ENCODE measurements at regions of chr4 and their contacts with region 1.

Region 1: DNA sequence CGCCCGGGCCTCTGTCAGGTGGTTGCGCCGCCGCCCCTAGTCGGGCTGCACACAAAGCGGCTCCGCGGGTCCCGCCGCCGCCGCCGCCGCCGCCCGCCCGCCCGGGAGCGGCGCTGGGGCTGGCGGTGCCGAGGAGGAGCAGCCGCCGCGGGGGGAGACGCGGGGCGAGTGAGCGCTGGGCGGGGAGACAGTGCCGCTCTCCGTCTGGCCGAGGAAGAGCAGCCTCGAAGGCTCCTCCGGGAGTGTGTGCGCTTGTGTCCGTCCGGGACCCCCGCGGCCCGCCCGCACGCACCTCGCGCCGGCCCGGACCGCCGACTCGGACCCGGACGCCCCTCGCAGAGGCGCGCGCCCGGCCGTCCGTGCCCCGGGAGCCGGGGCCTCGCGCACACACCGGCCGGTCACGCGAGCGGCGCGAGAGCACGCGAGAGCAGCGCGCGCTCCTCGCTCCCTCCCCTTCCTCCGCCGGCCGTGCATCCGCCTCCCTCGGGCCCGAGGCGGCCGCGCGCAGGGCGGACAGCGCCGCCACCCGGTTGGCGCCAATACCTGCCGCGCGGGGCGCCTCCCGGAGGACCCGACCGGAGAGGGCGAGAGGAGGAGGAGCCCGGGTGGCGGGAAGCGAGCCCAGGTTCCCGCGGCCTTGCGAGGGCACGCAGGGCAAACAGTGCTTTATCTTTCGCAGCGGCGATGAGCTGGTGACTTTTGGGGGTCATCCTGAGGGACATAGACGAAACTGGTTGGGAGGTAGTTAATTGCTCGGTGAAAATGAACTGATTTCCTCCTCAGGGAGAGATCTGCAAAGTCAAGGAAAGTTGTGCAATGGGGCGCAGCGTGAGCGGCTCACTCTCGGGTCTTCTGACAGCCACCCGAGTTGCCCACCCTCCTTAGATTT is at the start of gene PDS5A:
- DNase-seq: peak; percentile 89 to 96 (median 95)
- ATAC-seq: peak; percentile 92 to 95
- H3K4me3 ChIP-seq: peak within 1 kb of the TSS; percentile 98
- H3K27ac ChIP-seq: peak within 1 kb of the TSS; percentile 93
- H3K4me1 ChIP-seq: no peaks in the 10 kb centered on the region
- H3K27me3 ChIP-seq: no peaks in the 10 kb centered on the region
- total RNA-seq, gene PDS5A: 30.0 to 37.3 (median 36.5) TPM

Region 2: DNA sequence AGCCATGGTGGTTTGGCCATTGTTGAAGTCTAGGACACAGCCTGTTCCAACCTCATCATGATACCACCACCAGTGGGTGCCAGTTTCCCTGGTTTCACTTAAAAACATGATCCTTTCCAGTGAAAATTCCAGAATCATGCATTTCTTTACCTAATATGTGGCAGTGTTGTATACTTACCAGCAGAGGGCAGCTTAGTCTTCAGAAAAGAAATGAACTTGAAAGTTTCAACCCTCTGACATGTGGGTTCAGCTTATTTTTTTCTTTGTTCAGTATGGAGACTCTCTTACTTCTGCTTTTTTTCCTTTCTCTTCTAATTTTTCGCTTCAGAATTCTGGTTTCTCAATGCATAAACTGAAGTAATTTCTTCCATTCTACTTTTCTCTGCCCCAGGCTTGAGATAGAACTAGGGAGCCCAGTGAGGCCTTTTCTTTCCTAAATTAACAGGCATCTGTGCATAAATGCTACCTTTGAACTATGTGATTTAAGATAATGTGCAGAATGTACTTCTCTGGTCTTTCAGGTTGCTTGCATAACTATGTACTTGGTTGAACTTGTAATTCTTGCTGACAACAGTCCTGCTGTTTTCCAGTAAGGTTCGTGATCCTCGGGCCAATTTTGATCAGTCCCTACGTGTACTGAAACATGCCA is 508.2 kb before region 1 on chr4:
- intact Hi-C with region 1: loop called in 2 of 4 experiments (anchors 5 to 10 kb)
- DNase-seq: peak in 2 of 3 donors; percentile 30 to 63
- ATAC-seq: peak; percentile 69 to 86
- H3K4me3 ChIP-seq: no peak overlapping the region
- H3K27ac ChIP-seq: no peak overlapping the region
- H3K4me1 ChIP-seq: no peaks in the 10 kb centered on the region
- H3K27me3 ChIP-seq: no peaks in the 10 kb centered on the region

Region 3: DNA sequence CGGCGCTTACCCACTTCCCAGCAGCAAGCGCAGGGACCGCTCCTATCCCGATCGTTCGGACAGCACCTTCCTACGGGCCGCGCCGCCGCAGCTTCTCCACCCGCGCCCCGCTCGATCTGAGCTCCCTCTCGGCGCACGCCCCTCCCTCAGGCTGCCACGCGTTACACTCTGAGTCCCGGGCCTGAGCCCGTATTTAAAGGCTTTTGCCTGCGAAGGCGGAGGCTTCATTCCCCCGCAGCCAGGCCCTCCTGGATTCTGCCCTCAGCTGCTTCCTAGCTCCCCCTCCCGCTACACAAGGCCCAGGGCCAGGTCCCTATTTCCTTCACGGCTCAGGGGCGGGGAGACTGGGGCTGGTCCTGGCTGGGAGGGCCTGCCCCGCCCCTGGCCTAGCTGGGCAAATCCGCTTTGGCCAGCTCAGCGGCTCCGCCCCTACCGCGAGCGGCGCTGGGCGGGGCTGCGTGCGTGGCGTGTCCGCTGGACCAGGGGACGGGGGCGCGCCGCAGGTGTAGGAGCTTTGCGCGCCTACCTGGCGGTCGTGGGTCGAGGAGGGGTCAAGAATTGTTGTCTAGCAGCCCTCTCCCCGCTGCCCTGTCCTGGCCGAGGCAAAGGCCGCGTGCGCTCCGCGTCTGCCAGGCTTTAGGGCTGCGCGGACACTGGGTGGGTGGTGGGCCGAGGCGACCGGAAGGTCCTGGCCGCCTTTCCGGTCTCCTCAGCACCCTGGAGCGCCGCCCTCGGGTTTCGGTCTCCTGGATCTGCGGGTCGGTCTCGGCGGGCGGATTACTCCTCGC is 450.3 kb before region 1 on chr4 and contains the start of gene UGDH:
- intact Hi-C with region 1: loop called in 1 of 4 experiments (anchors 10 kb)
- DNase-seq: peak; percentile 98 to 99 (median 99)
- ATAC-seq: peak; percentile 99
- H3K4me3 ChIP-seq: peak within 1 kb of the TSS; percentile 48
- H3K27ac ChIP-seq: peak within 1 kb of the TSS; percentile 86
- H3K4me1 ChIP-seq: no peaks in the 10 kb centered on the region
- H3K27me3 ChIP-seq: no peaks in the 10 kb centered on the region
- total RNA-seq, gene UGDH: 18.0 to 33.1 (median 22.6) TPM

Region 4: GRCh38 chr4:40056716-40057585 is 79.2 kb after region 1 on chr4 and contains the start of gene N4BP2:
- intact Hi-C with region 1: loop called in 2 of 4 experiments (anchors 5 to 10 kb)
- DNase-seq: peak; percentile 88 to 96 (median 95)
- ATAC-seq: peak; percentile 88 to 90
- H3K4me3 ChIP-seq: peak within 1 kb of the TSS; percentile 74
- H3K27ac ChIP-seq: peak within 1 kb of the TSS; percentile 97
- H3K4me1 ChIP-seq: no peaks in the 10 kb centered on the region
- H3K27me3 ChIP-seq: no peaks in the 10 kb centered on the region
- total RNA-seq, gene N4BP2: 5.6 to 7.3 (median 6.2) TPM